ENCODE measurements at regions of chr16 and their contacts with region 1.

Region 1: DNA sequence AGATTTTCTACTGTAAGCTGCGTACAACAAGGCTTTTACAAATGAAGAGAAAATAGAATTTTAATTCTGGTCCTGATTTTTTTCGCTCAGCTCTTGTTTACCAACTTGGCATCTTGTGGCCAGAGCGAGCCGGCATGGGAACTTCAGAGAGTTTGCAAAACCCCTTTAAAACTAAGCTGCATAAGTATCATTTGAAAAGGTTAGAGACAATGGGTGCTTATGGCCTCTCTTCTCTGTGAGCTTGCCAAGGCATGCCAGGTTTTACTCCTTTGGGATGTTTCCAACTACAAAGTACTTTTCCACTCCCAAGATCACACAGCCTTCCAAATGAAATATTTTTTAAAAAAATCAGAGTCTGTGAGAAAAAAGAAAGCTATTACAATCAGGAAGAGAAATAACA is 62.4 kb upstream of the FA2H start:
- DNase-seq: no peak
- ATAC-seq: no peak
- H3K4me3 ChIP-seq: no peak overlapping the region
- H3K27ac ChIP-seq: no peak overlapping the region
- H3K4me1 ChIP-seq: no peaks in the 10 kb centered on the region
- H3K27me3 ChIP-seq: peaks cover 0 to 9% (median 0%) of the 10 kb centered on the region in 7 donors
- CTCF ChIP-seq: no peak

Region 2: GRCh38 chr16:74743668-74744299 is 93.3 kb before region 1 on chr16:
- intact Hi-C with region 1: no loop called
- DNase-seq: no peak
- ATAC-seq: peak in 2 of 8 donors; percentile 19 to 24
- H3K4me3 ChIP-seq: no peak overlapping the region
- H3K27ac ChIP-seq: no peak overlapping the region
- H3K4me1 ChIP-seq: peaks cover 0 to 3% (median 0%) of the 10 kb centered on the region in 9 donors
- H3K27me3 ChIP-seq: peaks cover 0 to 39% (median 7%) of the 10 kb centered on the region in 7 donors
- CTCF ChIP-seq: no peak

Region 3: GRCh38 chr16:74774203-74775116 is 62.6 kb before region 1 on chr16 and contains the start of gene FA2H:
- intact Hi-C with region 1: loop called in 1 of 10 experiments (anchors 10 kb)
- DNase-seq: peak; percentile 25 to 61
- ATAC-seq: peak; percentile 79 to 97 (median 92)
- H3K4me3 ChIP-seq: peak within 1 kb of the TSS; percentile 4 to 55 (median 45)
- H3K27ac ChIP-seq: no peak within 1 kb of the TSS
- H3K4me1 ChIP-seq: peaks cover 0 to 13% (median 10%) of the 10 kb centered on the region in 9 donors
- H3K27me3 ChIP-seq: peaks cover 0 to 67% (median 51%) of the 10 kb centered on the region in 7 donors
- CTCF ChIP-seq: peak in 8 of 9 donors; percentile 11 to 50 (median 36)
- total RNA-seq, gene FA2H: 0.41 TPM in 1 of 10 donors, not detected in the others